ENCODE measurements at regions of chr3 and their contacts with region 1.

Region 1: GRCh38 chr3:98588065-98588464 is 5.3 kb downstream of the CPOX start:
- DNase-seq: no peak
- ATAC-seq: no peak
- H3K4me3 ChIP-seq: no peak overlapping the region
- H3K4me3 Mint-ChIP-seq: no peak overlapping the region
- H3K27ac ChIP-seq: no peak overlapping the region
- H3K27ac Mint-ChIP-seq: no peak overlapping the region
- H3K4me1 ChIP-seq: peaks cover 13% of the 10 kb centered on the region
- H3K4me1 Mint-ChIP-seq: peaks cover 37% of the 10 kb centered on the region
- H3K27me3 ChIP-seq: no peaks in the 10 kb centered on the region
- H3K27me3 Mint-ChIP-seq: no peaks in the 10 kb centered on the region
- CTCF ChIP-seq: no peak

Region 2: GRCh38 chr3:98188545-98188944 is 399.5 kb before region 1 on chr3:
- CTCF ChIA-PET with region 1: no interaction called
- POLR2A ChIA-PET with region 1: no interaction called
- intact Hi-C with region 1: loop called in 1 of 2 experiments (anchors 10 kb)
- DNase-seq: peak in 2 of 14 experiments; percentile 28 to 54
- ATAC-seq: no peak
- H3K4me3 ChIP-seq: no peak overlapping the region
- H3K4me3 Mint-ChIP-seq: no peak overlapping the region
- H3K27ac ChIP-seq: no peak overlapping the region
- H3K27ac Mint-ChIP-seq: no peak overlapping the region
- H3K4me1 ChIP-seq: no peaks in the 10 kb centered on the region
- H3K4me1 Mint-ChIP-seq: peaks cover 5% of the 10 kb centered on the region
- H3K27me3 ChIP-seq: no peaks in the 10 kb centered on the region
- H3K27me3 Mint-ChIP-seq: no peaks in the 10 kb centered on the region
- CTCF ChIP-seq: no peak

Region 3: DNA sequence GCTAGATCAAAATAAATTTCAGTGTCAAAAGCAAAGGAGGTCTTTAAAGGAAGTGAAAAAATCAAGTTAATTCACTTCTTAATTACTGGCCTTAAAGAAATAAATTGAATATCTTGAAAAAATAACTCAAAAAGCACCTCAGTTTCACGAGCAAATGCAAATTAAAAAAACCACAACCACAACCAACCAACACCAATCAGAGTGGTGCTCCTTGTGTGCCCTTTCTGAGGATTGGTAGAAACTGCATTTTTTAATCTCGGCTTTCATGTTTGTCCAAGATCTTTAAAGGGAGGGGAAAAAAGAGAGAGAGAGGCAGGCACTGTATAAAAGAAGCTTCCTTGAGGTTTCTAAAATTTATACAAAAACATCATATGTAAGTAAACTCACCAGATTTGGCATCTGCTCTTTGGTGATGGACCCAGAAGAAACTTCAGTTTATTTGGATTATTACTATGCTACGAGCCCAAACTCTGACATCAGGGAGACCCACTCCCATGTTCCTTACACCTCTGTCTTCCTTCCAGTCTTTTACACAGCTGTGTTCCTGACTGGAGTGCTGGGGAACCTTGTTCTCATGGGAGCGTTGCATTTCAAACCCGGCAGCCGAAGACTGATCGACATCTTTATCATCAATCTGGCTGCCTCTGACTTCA is 56.3 kb before region 1 on chr3 and contains the start of gene GPR15:
- CTCF ChIA-PET with region 1: no interaction called
- POLR2A ChIA-PET with region 1: no interaction called
- intact Hi-C with region 1: no loop called
- DNase-seq: peak in 2 of 14 experiments; percentile 42 to 49
- ATAC-seq: peak; percentile 43
- H3K4me3 ChIP-seq: peak within 1 kb of the TSS; percentile 46
- H3K4me3 Mint-ChIP-seq: peak within 1 kb of the TSS; percentile 30
- H3K27ac ChIP-seq: no peak within 1 kb of the TSS
- H3K27ac Mint-ChIP-seq: no peak within 1 kb of the TSS
- H3K4me1 ChIP-seq: no peaks in the 10 kb centered on the region
- H3K4me1 Mint-ChIP-seq: no peaks in the 10 kb centered on the region
- H3K27me3 ChIP-seq: no peaks in the 10 kb centered on the region
- H3K27me3 Mint-ChIP-seq: no peaks in the 10 kb centered on the region
- CTCF ChIP-seq: no peak
- total RNA-seq, gene GPR15: 8.4 to 9.6 TPM

Measured in CD4-positive, alpha-beta T cell (primary cell).